GM10248 (cell line): ENCODE measurements at regions of chr20 and their contacts with region 1.

Region 1: DNA sequence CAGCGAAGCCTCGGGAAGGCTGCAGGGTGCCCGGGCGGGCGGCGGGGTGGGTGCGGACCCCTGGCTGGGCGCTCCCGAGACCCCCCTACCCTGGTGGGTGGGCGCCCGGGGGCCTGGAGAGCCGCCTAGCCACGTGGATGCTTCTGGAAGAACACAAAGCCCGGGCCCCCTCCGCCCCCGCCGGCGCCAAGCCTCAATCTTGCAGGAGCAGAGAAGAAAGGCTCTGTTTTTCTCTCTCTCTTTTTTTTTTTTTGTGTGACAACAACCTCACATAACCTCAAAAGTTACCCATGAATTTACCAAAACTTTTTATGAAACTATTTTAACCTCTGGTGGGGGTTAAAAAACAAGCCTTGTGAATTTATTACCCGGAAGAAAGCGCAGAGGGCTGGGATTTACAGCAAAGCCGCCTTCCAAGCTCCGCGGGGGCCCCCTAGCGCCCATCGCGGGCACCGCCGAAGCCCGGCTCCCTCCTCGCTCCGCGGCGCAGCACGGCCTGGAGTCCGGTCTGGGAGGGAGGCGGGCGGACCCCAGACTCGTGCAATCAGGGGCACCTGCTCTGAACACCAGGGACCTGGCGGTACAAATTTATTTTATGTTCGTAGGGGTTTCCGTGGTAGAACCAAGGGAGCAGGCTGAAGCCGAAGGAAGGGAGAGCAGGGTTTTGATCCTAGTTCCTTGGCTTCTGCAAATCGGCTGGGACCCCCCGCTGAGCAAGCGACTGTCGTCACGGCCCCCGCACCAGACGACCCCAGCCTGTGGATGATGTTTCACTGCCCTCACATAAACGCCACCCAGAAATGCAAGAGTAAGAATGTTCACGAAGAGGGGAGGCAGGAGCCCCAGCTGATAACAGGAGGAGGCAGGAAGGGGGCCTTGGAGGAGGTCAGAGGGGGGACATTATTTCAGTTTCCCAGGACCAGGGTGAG is 58.9 kb downstream of the ZNF831 start:
- DNase-seq: peak; percentile 88
- CTCF ChIP-seq: peak; percentile 91

Region 2: DNA sequence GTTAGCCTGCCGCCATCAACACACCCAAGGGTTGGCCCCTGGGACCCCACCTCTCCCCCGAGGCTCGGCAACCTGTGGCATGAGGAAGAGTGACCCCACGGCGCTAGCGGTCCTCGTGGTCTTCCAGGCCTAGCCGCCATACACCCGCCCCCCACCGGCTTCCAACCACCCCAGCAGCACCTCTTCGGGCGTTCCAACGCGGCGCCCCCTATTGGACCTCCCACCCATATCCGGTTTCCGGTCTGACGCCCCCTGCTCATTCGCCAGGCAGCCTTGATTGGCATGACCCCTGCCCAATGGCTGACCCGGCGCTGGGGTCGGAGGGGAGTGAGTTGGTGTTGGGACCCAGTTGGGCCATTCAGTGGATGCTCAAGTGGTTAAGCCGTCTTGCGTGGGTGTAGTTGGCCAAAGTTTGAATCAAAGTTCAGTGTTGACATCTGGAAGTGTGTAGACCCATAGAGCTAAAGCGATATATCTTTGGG is 371.8 kb before region 1 on chr20 and contains the start of gene GNAS-AS1:
- CTCF ChIA-PET with region 1: no interaction called
- POLR2A ChIA-PET with region 1: no interaction called
- DNase-seq: peak; percentile 94
- CTCF ChIP-seq: peak; percentile 9

Region 3: DNA sequence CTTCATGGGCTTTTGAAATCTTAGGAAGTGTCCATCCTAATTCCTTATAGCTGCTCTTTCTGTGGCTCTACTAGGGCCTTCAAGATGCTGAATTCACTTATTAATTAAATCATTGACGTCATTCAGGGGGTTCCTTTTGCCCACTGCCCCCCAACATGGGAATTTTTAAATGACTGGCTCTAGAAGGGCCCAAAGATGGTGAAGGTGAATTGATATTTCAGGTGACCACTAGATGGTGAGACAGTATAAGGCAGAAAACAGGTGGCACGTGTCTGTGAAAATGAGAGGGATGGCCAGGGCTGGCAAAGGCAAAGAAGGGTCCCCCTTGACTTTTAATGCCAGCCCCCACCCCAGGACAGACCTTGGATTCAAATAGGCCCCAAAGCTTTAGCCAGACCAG is 358.2 kb before region 1 on chr20:
- CTCF ChIA-PET with region 1: interaction called, 41 read pairs
- POLR2A ChIA-PET with region 1: no interaction called
- DNase-seq: no peak
- CTCF ChIP-seq: peak; percentile 57

Region 4: GRCh38 chr20:58870239-58871014 is 352.1 kb before region 1 on chr20:
- CTCF ChIA-PET with region 1: interaction called, 41 read pairs
- POLR2A ChIA-PET with region 1: no interaction called
- DNase-seq: peak; percentile 64
- CTCF ChIP-seq: peak; percentile 89

Region 5: DNA sequence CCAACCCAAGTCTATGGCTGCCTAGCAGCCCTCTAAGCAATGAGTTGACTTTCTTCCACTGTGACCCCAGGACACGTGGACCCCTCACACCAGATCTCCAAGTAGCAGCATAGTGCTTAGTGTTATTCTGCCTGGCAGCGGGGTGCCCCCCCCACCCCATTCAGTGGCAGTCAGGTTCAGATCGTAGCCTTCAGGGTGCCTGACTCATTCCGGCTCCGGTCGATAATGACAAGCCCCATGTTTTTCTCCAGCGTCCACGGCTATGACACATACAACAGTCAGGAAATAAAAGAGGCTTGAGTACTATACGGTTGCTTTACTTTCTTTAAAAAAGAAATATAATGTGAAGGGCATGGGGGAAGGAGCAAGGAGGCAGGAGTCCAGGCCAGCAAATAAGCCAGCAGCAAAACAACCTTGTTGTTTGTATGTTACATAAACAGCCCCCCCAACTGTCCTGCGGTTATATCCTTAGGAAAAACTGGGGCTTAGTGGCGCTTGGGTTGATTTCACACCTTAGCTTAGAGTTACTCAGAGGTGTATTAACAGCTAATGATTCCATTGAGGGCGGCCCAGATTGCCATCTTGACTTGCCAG is 346.9 kb before region 1 on chr20:
- CTCF ChIA-PET with region 1: interaction called, 14 read pairs
- POLR2A ChIA-PET with region 1: no interaction called
- DNase-seq: no peak
- CTCF ChIP-seq: no peak

Region 6: GRCh38 chr20:59120491-59120890 is 102.0 kb before region 1 on chr20:
- CTCF ChIA-PET with region 1: interaction called, 15 read pairs
- POLR2A ChIA-PET with region 1: no interaction called
- DNase-seq: peak; percentile 28
- CTCF ChIP-seq: no peak

Region 7: GRCh38 chr20:59191756-59192532 is 30.6 kb before region 1 on chr20:
- CTCF ChIA-PET with region 1: no interaction called
- POLR2A ChIA-PET with region 1: no interaction called
- DNase-seq: no peak
- CTCF ChIP-seq: no peak

Region 8: GRCh38 chr20:59242714-59243113 is 20.2 kb after region 1 on chr20:
- CTCF ChIA-PET with region 1: interaction called, 11 read pairs
- POLR2A ChIA-PET with region 1: no interaction called
- DNase-seq: no peak
- CTCF ChIP-seq: no peak

Region 9: DNA sequence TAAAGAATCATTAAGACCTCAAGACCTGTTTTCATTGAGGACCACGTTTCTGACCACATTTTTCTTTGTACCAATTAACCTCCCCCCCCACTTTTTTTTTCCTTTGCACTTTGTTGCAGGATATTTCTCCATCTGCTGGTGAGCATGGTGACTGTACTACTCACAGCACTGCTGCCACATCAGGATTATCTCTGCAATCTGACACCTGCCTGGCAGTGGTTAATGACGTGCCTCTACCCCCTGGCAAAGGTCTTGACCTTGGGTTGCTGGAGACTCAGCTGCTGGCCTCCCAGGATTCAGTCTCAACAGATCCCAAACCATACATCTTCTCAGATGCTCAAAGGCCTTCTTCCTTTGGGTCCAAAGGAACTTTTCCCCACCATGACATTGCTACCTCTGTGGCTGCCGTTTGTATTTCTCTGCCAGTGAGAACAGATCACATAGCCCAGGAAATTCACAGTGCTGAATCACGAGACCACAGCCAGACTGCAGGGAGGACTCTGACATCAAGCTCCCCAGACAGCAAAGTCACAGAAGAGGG is 31.3 kb after region 1 on chr20:
- CTCF ChIA-PET with region 1: no interaction called
- POLR2A ChIA-PET with region 1: no interaction called
- DNase-seq: no peak
- CTCF ChIP-seq: no peak